ENCODE measurements at regions of chr1 and their contacts with region 1.

Region 1: GRCh38 chr1:89873770-89874169 is 52.9 kb downstream of the LRRC8D start:
- DNase-seq: peak in 1 of 9 experiments; percentile 55
- ATAC-seq: no peak
- H3K4me3 ChIP-seq: no peak overlapping the region
- H3K4me3 Mint-ChIP-seq: no peak overlapping the region
- H3K27ac ChIP-seq: no peak overlapping the region
- H3K27ac Mint-ChIP-seq: peak overlapping the region; percentile 15
- H3K4me1 ChIP-seq: peaks cover 38% of the 10 kb centered on the region
- H3K4me1 Mint-ChIP-seq: peaks cover 80% of the 10 kb centered on the region
- H3K27me3 ChIP-seq: no peaks in the 10 kb centered on the region
- H3K27me3 Mint-ChIP-seq: no peaks in the 10 kb centered on the region
- CTCF ChIP-seq: no peak

Region 2: DNA sequence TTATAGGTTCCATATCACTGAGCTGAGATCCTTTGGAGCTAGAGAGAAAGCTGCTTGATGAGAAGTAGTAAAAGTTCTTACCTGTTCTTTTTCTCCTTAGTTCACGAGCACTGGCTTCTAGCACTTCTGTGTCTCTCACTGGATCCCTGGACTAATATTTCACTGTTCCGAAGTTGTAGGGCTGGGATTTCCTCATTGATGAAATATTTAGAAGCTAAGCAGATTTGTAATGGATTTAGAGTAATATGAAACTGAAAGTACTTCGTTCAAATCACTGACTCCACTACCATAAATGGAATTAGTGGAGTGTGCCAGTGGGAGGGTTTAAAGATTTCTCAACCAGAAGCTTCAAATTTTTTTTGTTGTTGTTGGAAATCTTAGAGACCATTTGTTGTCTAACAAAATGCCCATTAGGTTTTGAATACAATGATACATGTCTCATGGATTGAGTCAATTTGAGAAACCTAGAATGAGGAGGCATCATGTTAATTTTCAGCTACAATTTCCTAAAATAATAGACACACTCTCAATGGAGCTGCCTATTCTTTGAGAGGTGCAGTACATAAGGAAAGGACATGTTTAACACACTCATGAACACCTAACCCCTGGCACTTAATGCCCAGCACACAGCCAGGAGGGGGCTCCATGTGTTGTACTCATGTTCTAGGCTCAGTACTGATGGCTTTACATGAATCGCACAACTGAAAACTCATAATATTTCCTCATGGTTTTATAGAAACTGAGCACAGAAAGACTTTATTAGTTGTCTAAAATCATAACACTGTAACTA is 808.5 kb before region 1 on chr1 and contains the start of gene GBP1:
- CTCF ChIA-PET with region 1: no interaction called
- POLR2A ChIA-PET with region 1: no interaction called
- intact Hi-C with region 1: loop called in 1 of 2 experiments (anchors 10 kb)
- DNase-seq: peak in 2 of 9 experiments; percentile 63 to 78
- ATAC-seq: peak; percentile 85
- H3K4me3 ChIP-seq: peak within 1 kb of the TSS; percentile 60 to 68
- H3K4me3 Mint-ChIP-seq: peak within 1 kb of the TSS; percentile 98
- H3K27ac ChIP-seq: peak within 1 kb of the TSS; percentile 65 to 80
- H3K27ac Mint-ChIP-seq: peak within 1 kb of the TSS; percentile 98
- H3K4me1 ChIP-seq: peaks cover 35% of the 10 kb centered on the region
- H3K4me1 Mint-ChIP-seq: peaks cover 63% of the 10 kb centered on the region
- H3K27me3 ChIP-seq: no peaks in the 10 kb centered on the region
- H3K27me3 Mint-ChIP-seq: no peaks in the 10 kb centered on the region
- CTCF ChIP-seq: no peak
- total RNA-seq, gene GBP1: 20.8 to 25.9 TPM

Region 3: DNA sequence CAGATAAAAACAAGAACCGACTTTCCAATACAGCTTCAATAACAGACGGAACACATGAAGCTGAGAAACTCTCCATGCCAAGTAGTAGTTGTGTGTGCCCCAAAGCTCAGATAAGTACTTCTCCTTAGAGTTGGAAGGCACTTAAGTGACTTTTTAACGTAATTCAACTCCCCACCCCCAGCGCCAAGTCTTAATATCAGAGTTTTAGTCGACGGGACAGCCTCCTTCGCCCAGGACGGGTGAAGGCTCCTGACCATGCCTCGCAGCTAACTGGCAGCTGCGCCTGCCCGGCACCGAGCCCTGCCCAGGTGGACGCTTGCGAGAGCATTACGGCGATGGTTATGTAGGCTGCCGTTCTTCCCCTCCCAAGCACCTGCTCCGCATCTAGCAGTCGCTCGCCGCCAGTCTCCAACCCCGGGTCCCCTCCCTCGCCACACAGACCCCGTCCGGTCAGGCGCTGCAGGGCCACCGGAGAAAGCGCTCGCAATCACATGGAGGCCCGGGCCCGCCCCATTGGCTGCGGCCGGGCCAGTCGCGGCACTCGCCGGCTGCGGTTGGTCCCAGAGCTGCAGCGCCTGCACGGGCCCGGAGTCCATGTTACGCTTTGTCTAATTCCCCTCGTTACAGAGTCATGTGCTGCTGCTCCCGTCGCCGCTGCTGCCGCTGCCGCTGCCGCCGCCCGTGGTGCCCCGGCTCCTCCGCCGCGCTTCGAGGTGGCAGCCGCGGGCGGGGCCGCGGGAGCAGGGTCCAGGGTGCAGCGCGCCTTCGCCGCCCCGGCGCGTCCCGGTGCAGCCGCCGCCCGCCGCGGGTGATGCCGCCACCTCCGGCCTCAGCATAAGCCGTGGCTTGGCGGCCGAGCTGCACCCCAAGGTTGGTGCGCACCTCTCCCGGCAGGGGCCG is 53.1 kb before region 1 on chr1 and contains the start of gene LRRC8D:
- CTCF ChIA-PET with region 1: no interaction called
- POLR2A ChIA-PET with region 1: interaction called, 7 read pairs
- intact Hi-C with region 1: loop called in 1 of 2 experiments (anchors 2 kb)
- DNase-seq: peak; percentile 10 to 81 (median 64)
- ATAC-seq: peak; percentile 52
- H3K4me3 ChIP-seq: peak within 1 kb of the TSS; percentile 78 to 82
- H3K4me3 Mint-ChIP-seq: peak within 1 kb of the TSS; percentile 87
- H3K27ac ChIP-seq: peak within 1 kb of the TSS; percentile 51 to 63
- H3K27ac Mint-ChIP-seq: peak within 1 kb of the TSS; percentile 91
- H3K4me1 ChIP-seq: peaks cover 23% of the 10 kb centered on the region
- H3K4me1 Mint-ChIP-seq: peaks cover 44% of the 10 kb centered on the region
- H3K27me3 ChIP-seq: no peaks in the 10 kb centered on the region
- H3K27me3 Mint-ChIP-seq: no peaks in the 10 kb centered on the region
- CTCF ChIP-seq: no peak
- total RNA-seq, gene LRRC8D: 14.2 to 16.9 TPM

Region 4: GRCh38 chr1:89855413-89856123 is 18.2 kb before region 1 on chr1:
- CTCF ChIA-PET with region 1: no interaction called
- POLR2A ChIA-PET with region 1: interaction called, 4 read pairs
- intact Hi-C with region 1: loop called in 1 of 2 experiments (anchors 2 kb)
- DNase-seq: peak in 2 of 9 experiments; percentile 62 to 83
- ATAC-seq: peak; percentile 80
- H3K4me3 ChIP-seq: no peak overlapping the region
- H3K4me3 Mint-ChIP-seq: no peak overlapping the region
- H3K27ac ChIP-seq: peak overlapping the region; percentile 43 to 66
- H3K27ac Mint-ChIP-seq: no peak overlapping the region
- H3K4me1 ChIP-seq: peaks cover 38% of the 10 kb centered on the region
- H3K4me1 Mint-ChIP-seq: peaks cover 18% of the 10 kb centered on the region
- H3K27me3 ChIP-seq: no peaks in the 10 kb centered on the region
- H3K27me3 Mint-ChIP-seq: no peaks in the 10 kb centered on the region
- CTCF ChIP-seq: no peak

Region 5: GRCh38 chr1:89863165-89863830 is 10.5 kb before region 1 on chr1:
- CTCF ChIA-PET with region 1: interaction called, 4 read pairs
- POLR2A ChIA-PET with region 1: interaction called, 4 read pairs
- intact Hi-C with region 1: loop called in 1 of 2 experiments (anchors 2 kb)
- DNase-seq: peak in 2 of 9 experiments; percentile 35 to 52
- ATAC-seq: peak; percentile 63
- H3K4me3 ChIP-seq: no peak overlapping the region
- H3K4me3 Mint-ChIP-seq: peak overlapping the region; percentile 73
- H3K27ac ChIP-seq: peak overlapping the region; percentile 3 to 63
- H3K27ac Mint-ChIP-seq: peak overlapping the region; percentile 98
- H3K4me1 ChIP-seq: peaks cover 39% of the 10 kb centered on the region
- H3K4me1 Mint-ChIP-seq: peaks cover 77% of the 10 kb centered on the region
- H3K27me3 ChIP-seq: no peaks in the 10 kb centered on the region
- H3K27me3 Mint-ChIP-seq: no peaks in the 10 kb centered on the region
- CTCF ChIP-seq: no peak

Region 6: GRCh38 chr1:89898695-89899470 is 25.1 kb after region 1 on chr1:
- CTCF ChIA-PET with region 1: no interaction called
- POLR2A ChIA-PET with region 1: interaction called, 3 read pairs
- intact Hi-C with region 1: loop called in 1 of 2 experiments (anchors 1 kb)
- DNase-seq: no peak
- ATAC-seq: no peak
- H3K4me3 ChIP-seq: no peak overlapping the region
- H3K4me3 Mint-ChIP-seq: no peak overlapping the region
- H3K27ac ChIP-seq: no peak overlapping the region
- H3K27ac Mint-ChIP-seq: peak overlapping the region; percentile 30
- H3K4me1 ChIP-seq: no peaks in the 10 kb centered on the region
- H3K4me1 Mint-ChIP-seq: peaks cover 59% of the 10 kb centered on the region
- H3K27me3 ChIP-seq: no peaks in the 10 kb centered on the region
- H3K27me3 Mint-ChIP-seq: no peaks in the 10 kb centered on the region
- CTCF ChIP-seq: no peak